Endothelial cell of umbilical vein (primary cell): ENCODE measurements at regions of chr10 and their contacts with region 1.

Region 1: DNA sequence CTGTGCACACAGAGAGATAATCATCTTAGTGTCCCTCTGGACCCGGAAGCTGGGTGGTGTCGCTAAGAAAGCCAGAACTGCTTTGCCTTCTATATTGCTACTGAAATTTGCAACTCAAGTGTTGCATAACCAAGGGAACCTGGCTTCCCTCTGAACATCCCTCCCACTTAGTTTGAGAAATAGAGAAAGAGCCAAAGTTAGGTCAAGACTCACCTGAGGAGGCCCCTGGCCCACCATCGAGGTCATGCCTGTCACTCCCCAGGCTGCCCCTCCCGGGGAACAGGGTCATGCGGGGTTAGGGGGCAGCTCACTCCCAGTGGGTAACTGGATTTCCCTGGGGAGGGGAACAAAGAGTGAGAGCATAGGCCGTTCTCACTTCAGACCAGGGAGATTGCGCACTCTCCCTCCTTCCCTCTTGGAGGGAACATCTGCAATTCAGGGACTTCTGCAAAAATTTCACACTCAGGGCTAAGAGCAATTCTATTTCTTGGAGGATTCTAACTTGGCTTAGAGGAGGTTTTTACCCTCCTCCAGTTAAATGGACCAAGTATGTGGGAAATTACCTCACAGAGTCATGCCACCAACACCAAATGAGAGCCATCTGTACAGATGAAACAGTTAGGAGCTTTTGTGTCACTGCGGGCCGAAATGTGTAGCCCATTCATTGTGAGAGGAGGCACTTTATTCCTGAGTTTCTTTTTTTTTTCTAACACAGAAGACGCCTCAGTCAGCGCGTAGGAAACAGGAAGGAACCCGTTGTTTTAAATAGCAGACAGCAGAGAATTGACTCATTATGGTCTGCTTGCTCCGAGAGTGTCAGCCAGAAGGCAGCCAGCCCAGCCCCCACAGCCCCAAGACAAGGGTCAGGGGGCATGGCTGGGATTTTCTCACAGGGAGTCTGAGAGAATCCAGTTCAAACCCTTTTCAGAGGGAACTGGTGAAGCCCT is 221.3 kb downstream of the ARHGAP12 start:
- DNase-seq: peak; percentile 96
- H3K4me3 ChIP-seq: peak overlapping the region in 1 of 3 experiments; percentile 16
- H3K27ac ChIP-seq: peak overlapping the region; percentile 98
- H3K4me1 ChIP-seq: peaks cover 45% of the 10 kb centered on the region
- H3K27me3 ChIP-seq: no peaks in the 10 kb centered on the region
- CTCF ChIP-seq: no peak
- POLR2A ChIP-seq: no peak

Region 2: DNA sequence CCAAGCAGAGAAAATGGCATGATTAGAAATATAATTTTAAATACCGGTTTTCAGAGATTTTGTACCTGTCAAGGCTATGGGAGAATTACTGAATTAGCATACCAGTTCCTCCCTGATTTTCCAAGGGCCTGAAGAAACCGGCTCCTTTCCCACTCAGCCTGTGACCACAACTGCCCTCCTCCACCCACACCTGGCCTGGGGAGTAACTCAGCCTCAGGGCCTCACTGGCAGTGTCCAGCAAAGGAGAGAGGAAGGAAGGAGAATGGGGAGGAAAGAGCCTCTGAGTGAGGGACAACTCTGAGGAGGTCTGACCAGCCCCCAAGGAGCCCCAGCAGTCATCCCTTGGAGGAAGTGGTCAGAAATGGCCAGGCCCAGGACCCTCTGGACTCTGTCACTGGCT is 979.8 kb before region 1 on chr10:
- CTCF ChIA-PET with region 1: no interaction called
- POLR2A ChIA-PET with region 1: no interaction called
- dilution Hi-C with region 1: no loop called
- intact Hi-C with region 1: loop called (anchors 2 kb)
- DNase-seq: no peak
- H3K4me3 ChIP-seq: no peak overlapping the region
- H3K27ac ChIP-seq: no peak overlapping the region
- H3K4me1 ChIP-seq: no peaks in the 10 kb centered on the region
- H3K27me3 ChIP-seq: no peaks in the 10 kb centered on the region
- CTCF ChIP-seq: no peak
- POLR2A ChIP-seq: no peak

Region 3: DNA sequence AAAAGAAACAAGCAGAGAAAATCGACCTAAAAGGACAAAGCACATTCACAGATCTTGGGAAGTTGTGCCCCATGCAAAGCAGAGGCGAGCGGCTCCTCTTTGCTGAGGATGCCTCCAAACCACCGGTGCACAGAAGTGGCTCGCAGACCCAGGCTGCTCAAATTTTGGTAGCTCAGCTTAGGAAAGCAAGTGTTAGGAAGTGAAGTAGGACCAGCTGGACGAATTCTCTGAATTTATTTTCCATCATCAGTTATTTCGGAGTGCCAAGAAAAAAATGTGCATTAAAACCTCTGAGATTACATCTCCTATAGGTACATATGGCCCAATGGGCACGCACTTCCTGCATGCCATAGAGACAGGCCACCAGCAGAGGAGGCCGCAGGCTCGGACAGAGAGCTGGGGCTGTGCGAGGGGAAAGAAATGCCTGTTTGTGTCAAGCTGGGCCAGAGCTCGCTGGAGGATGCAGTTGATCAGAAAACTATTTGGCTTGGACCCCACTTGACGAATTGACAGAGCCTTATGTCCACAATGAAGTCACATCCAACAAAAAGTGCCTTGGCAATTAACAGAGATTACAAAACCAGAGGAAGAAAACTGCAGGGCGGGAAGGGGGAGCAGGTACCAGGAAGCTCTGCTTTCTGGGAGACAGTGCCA is 955.6 kb before region 1 on chr10:
- CTCF ChIA-PET with region 1: interaction called, 11 read pairs
- POLR2A ChIA-PET with region 1: no interaction called
- dilution Hi-C with region 1: no loop called
- intact Hi-C with region 1: no loop called
- DNase-seq: peak; percentile 76
- H3K4me3 ChIP-seq: no peak overlapping the region
- H3K27ac ChIP-seq: no peak overlapping the region
- H3K4me1 ChIP-seq: peaks cover 5% of the 10 kb centered on the region
- H3K27me3 ChIP-seq: no peaks in the 10 kb centered on the region
- CTCF ChIP-seq: peak; percentile 90 to 98
- POLR2A ChIP-seq: no peak

Region 4: DNA sequence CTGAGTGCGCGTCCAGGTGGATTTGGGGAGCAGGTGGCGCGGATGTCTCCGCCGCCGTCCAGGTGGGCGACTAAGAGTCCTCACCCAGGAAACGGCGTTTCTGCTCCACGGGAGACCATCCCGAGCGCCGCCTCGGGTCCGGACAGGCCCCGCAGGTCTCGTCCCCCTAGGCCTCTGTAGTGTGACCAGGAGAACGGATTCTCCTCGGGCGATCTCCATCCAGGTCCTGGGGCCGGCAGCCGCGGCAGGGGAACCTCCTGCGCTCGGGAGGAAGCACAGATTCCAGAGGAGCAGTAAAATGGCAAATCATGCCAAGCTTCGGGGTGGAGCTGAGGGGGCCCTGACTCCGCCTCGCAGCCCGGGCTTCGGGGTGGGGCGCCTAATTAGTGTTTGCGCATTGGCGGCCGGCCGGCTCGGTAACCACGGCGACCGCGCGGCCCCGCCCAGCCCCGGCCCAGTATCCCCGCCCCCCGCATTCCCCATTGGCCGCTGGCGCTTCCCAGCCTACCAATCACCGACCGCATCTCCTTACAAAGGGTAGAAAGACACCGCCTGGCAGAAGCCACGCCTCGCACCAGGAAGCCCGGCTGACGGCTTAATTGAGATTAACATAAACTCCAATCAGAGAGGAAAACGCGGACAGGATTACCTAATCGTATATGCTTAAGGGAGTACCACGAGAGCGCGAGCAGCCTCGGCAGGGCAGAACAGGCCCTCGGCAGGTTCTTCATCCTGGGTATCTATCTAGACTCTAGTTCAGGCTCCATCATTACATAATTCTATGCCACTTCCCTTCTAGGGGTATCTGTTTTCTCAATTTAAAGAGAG is 52.6 kb after region 1 on chr10:
- CTCF ChIA-PET with region 1: interaction called, 3 read pairs
- POLR2A ChIA-PET with region 1: no interaction called
- dilution Hi-C with region 1: no loop called
- intact Hi-C with region 1: loop called (anchors 1 kb)
- DNase-seq: peak; percentile 99
- H3K4me3 ChIP-seq: peak overlapping the region; percentile 57 to 77 (median 76)
- H3K27ac ChIP-seq: peak overlapping the region; percentile 94
- H3K4me1 ChIP-seq: peaks cover 11% of the 10 kb centered on the region
- H3K27me3 ChIP-seq: no peaks in the 10 kb centered on the region
- CTCF ChIP-seq: no peak
- POLR2A ChIP-seq: peak; percentile 83

Region 5: DNA sequence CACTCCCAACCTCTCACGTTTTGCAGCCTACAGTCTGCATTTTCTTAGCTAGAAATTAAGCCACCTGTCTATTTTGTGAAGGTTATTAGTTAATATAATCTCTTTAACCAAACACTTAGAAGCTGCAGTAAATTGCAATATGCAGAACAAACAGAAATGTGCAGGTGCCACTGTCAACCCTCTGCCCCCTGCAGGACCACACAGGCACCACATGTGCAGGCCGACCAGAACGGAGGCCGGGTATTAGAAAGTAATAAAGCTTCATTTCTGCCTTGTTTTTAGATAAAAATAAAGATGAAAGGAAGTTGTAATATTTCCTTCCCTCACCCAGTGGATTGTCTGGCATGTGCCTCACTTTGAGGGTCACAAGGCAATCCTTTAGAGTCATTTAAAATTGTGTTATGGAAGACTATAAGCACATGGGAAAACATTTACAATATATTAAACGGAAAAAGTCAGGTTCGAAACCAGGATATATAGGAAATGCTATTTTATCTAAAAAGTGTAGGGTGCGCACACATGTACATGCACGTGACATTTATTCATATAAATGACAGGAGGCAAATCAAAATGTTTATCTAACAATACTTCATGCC is 63.0 kb after region 1 on chr10:
- CTCF ChIA-PET with region 1: interaction called, 30 read pairs
- POLR2A ChIA-PET with region 1: no interaction called
- dilution Hi-C with region 1: no loop called
- intact Hi-C with region 1: loop called (anchors 2 kb)
- DNase-seq: peak; percentile 71
- H3K4me3 ChIP-seq: no peak overlapping the region
- H3K27ac ChIP-seq: no peak overlapping the region
- H3K4me1 ChIP-seq: peaks cover 7% of the 10 kb centered on the region
- H3K27me3 ChIP-seq: no peaks in the 10 kb centered on the region
- CTCF ChIP-seq: peak; percentile 84 to 86
- POLR2A ChIP-seq: no peak

Region 6: GRCh38 chr10:31947144-31947926 is 240.0 kb after region 1 on chr10:
- CTCF ChIA-PET with region 1: interaction called, 9 read pairs
- POLR2A ChIA-PET with region 1: no interaction called
- dilution Hi-C with region 1: no loop called
- intact Hi-C with region 1: loop called (anchors 2 kb)
- DNase-seq: peak; percentile 83
- H3K4me3 ChIP-seq: no peak overlapping the region
- H3K27ac ChIP-seq: peak overlapping the region; percentile 62
- H3K4me1 ChIP-seq: peaks cover 31% of the 10 kb centered on the region
- H3K27me3 ChIP-seq: no peaks in the 10 kb centered on the region
- CTCF ChIP-seq: peak; percentile 33 to 48
- POLR2A ChIP-seq: no peak